Dorsolateral prefrontal cortex (tissue), 120 donors: ENCODE measurements at regions of chr22 and their contacts with region 1.

Region 1: GRCh38 chr22:50696797-50697561 is 24.4 kb downstream of the SHANK3 start:
- DNase-seq: peak in 6 of 10 donors; percentile 28 to 62 (median 46)
- H3K4me3 ChIP-seq: peak overlapping the region; percentile 29 to 78 (median 61)
- H3K27ac ChIP-seq: peak overlapping the region in 48 of 59 donors; percentile 7 to 89 (median 67)
- H3K27me3 ChIP-seq: no peaks in the 10 kb centered on the region
- CTCF ChIP-seq: peak in 51 of 56 donors; percentile 23 to 74 (median 59)

Region 2: GRCh38 chr22:50620593-50621355 is 76.2 kb before region 1 on chr22:
- intact Hi-C with region 1: loop called (anchors 5 kb)
- DNase-seq: peak in 5 of 10 donors; percentile 43 to 79 (median 69)
- H3K4me3 ChIP-seq: peak overlapping the region; percentile 6 to 67 (median 51)
- H3K27ac ChIP-seq: peak overlapping the region in 57 of 59 donors; percentile 13 to 93 (median 70)
- H3K27me3 ChIP-seq: no peaks in the 10 kb centered on the region
- CTCF ChIP-seq: peak in 18 of 56 donors; percentile 2 to 86 (median 71)

Region 3: GRCh38 chr22:50627642-50628542 is 69.1 kb before region 1 on chr22 and contains the start of gene ARSA:
- intact Hi-C with region 1: loop called (anchors 5 kb)
- DNase-seq: peak; percentile 66 to 87 (median 79)
- H3K4me3 ChIP-seq: peak within 1 kb of the TSS; percentile 68 to 99 (median 90)
- H3K27ac ChIP-seq: peak within 1 kb of the TSS in 56 of 59 donors; percentile 24 to 92 (median 79)
- H3K27me3 ChIP-seq: no peaks in the 10 kb centered on the region
- CTCF ChIP-seq: peak in 53 of 56 donors; percentile 18 to 74 (median 57)
- total RNA-seq, gene ARSA: 32.1 to 72.7 (median 48.0) TPM